Activated naive CD4-positive, alpha-beta T cell treated with anti-CD3 and anti-CD28 coated beads for 36 hours (primary cell): ENCODE measurements at regions of chr3 and their contacts with region 1.

Region 1: GRCh38 chr3:157201648-157202278 is 41.8 kb upstream of the CCNL1 start:
- DNase-seq: no peak
- H3K4me3 Mint-ChIP-seq: no peak overlapping the region
- H3K27ac Mint-ChIP-seq: no peak overlapping the region
- H3K4me1 Mint-ChIP-seq: no peaks in the 10 kb centered on the region
- H3K27me3 Mint-ChIP-seq: no peaks in the 10 kb centered on the region

Region 2: GRCh38 chr3:156939315-156939714 is 262.4 kb before region 1 on chr3:
- CTCF ChIA-PET with region 1: no interaction called
- intact Hi-C with region 1: no loop called
- DNase-seq: no peak
- H3K4me3 Mint-ChIP-seq: no peak overlapping the region
- H3K27ac Mint-ChIP-seq: no peak overlapping the region
- H3K4me1 Mint-ChIP-seq: no peaks in the 10 kb centered on the region
- H3K27me3 Mint-ChIP-seq: peaks cover 6% of the 10 kb centered on the region

Region 3: DNA sequence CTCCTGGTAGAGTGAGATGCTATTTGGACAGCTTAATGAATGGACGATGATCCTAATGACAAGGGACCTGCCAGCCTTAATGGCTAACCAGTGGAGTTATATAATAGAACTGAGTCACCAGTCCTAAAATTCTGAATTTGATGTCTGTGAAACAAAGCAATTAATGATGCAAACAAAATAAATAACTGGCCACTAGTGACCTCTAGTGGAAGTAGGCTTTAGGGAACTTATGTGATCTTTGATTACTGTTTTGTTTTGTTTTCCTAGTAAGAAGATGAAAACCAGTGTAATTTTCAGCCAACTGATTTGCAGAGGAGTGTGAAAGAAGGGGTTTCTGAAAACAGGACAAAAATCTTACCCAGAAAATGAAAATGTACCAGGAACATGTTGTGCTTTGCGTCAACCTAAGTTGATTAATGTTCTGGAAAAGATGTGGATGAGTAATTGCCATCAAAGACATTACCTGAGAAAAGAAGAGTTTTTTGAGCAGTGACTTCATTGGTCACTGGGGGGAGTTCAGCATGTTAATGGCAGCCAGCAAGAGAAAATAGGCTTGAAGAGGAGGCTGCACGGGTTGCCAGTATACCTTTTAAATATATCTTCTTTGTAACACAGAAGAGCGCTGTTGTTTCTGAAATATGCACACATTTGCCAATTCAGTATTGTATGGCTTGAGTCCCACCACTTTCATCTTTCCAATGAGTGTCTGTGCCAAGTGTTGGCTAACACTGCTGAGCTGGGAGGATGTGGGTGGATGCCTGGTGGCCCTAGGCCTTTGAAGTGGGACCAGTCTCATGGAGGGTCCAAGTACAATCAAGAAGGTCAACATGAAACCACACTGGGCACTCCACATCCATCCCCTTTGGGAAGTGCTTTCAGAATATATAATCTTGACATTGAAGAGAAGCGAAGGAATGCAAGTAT is 292.1 kb after region 1 on chr3:
- CTCF ChIA-PET with region 1: no interaction called
- intact Hi-C with region 1: loop called (anchors 1 kb)
- DNase-seq: no peak
- H3K4me3 Mint-ChIP-seq: no peak overlapping the region
- H3K27ac Mint-ChIP-seq: no peak overlapping the region
- H3K4me1 Mint-ChIP-seq: no peaks in the 10 kb centered on the region
- H3K27me3 Mint-ChIP-seq: peaks cover 27% of the 10 kb centered on the region